ENCODE measurements at regions of chr18 and their contacts with region 1.

Region 1: DNA sequence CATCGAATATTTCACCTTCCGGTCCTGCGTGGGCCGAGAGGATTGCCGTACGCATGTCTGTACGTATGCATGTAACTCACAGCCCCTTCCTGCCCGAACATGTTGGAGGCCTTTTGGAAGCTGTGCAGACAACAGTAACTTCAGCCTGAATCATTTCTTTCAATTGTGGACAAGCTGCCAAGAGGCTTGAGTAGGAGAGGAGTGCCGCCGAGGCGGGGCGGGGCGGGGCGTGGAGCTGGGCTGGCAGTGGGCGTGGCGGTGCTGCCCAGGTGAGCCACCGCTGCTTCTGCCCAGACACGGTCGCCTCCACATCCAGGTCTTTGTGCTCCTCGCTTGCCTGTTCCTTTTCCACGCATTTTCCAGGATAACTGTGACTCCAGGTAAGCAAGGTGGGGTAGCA is at the start of gene SERPINB5:
- DNase-seq: peak; percentile 100
- H3K4me3 ChIP-seq: peak within 1 kb of the TSS; percentile 82 to 98 (median 94)
- H3K27ac ChIP-seq: peak within 1 kb of the TSS; percentile 100
- H3K4me1 ChIP-seq: peaks cover 40% of the 10 kb centered on the region
- H3K27me3 ChIP-seq: no peaks in the 10 kb centered on the region
- CTCF ChIP-seq: no peak
- total RNA-seq, gene SERPINB5: 428 to 490 TPM

Region 2: DNA sequence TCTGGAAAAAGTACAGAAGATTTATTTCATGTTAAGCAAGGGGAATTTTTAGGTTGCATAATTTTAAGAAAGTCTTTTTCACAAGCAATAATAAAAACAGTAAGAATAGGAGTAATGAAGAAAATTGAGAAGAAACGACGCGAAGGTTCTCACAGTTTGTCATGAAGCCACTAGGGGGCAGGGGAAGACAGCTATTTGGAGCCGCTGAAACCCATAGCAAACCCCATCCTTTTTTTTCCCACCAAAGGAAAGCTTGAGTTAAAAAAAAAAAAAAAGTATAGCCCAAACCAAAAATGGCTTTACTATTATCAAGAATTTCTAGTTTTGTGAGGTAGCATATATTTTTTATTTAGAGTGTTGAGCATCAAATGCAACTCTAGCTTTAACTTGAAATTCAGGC is 460.4 kb before region 1 on chr18:
- CTCF ChIA-PET with region 1: no interaction called
- dilution Hi-C with region 1: no loop called
- in situ Hi-C with region 1: no loop called
- intact Hi-C with region 1: loop called (anchors 5 kb)
- DNase-seq: peak; percentile 19
- H3K4me3 ChIP-seq: no peak overlapping the region
- H3K27ac ChIP-seq: no peak overlapping the region
- H3K4me1 ChIP-seq: no peaks in the 10 kb centered on the region
- H3K27me3 ChIP-seq: peaks cover 2% of the 10 kb centered on the region
- CTCF ChIP-seq: peak; percentile 78 to 80

Region 3: DNA sequence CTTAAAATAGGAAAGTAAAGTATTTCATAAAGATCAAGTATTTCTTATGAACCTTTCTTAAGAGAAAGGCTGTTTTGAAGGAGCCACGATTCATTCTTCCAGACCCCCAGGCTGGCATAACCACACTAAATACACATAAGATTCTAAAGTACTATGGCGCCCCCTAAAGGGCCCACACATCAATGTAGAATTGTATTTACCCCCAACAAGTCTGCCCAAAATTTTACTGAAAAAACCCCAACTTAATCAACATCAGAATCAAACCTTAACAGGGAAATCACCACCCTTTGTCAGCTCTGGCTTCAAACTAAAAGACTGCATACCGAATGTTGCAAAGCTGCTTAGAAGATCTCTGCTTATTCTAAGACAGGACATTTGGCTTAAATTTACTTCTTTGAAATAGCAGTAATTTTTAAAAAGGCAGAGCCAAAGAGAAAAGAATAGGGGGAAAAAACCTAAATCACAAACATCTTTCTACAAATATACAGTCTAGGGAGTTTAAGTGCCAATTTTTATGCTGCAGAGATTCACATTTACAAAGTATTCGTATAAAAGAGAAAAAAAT is 136.7 kb before region 1 on chr18:
- CTCF ChIA-PET with region 1: interaction called, 3 read pairs
- dilution Hi-C with region 1: no loop called
- in situ Hi-C with region 1: no loop called
- intact Hi-C with region 1: loop called (anchors 2 kb)
- DNase-seq: no peak
- H3K4me3 ChIP-seq: no peak overlapping the region
- H3K27ac ChIP-seq: no peak overlapping the region
- H3K4me1 ChIP-seq: peaks cover 16% of the 10 kb centered on the region
- H3K27me3 ChIP-seq: no peaks in the 10 kb centered on the region
- CTCF ChIP-seq: peak; percentile 48 to 53

Region 4: DNA sequence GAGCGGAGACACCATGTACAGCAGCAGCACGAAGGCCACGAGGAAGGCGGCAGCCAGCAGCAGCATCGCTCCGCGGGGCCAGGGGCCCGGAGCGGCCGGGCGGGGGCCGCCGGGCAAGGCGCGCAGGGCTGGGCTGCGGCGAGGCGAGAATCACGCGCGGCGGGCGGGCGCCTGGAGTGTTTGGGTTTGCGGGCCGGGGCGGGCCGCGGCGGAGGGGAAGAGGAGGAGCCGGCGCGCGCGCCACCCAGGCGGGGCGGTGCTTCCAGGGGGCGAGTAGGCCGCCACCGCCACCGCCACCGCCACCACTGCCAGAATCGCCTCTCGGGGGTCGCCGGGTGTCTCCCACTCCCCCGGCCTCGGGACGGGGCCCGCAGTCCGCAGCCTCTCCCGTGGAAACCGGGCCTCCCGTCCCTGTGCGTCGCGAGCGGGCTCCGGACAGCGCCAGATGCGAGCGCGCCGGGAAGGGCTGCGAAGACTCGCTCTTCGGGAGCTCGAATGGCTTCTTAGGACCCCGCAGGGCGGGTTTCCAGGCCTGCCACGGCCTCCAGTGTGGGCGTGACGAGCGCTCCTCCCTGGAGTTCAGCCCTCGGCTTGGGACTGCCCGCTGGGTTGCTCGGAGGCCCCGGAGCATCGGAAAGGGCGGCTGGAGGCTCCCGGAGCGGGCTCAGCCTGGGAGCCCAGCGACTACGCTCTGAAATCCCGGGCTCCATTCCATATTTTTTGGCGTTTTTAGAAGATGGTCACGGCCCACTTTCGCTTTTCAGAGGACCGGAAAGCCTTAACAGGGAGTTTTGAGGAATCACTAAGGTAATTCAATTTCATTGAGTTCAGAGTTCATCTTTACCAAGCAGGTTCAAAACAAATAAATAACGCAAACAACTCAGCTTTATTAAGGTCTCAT is 109.4 kb before region 1 on chr18 and contains the start of gene KDSR:
- CTCF ChIA-PET with region 1: no interaction called
- dilution Hi-C with region 1: no loop called
- in situ Hi-C with region 1: no loop called
- intact Hi-C with region 1: loop called (anchors 2 kb)
- DNase-seq: peak; percentile 99
- H3K4me3 ChIP-seq: peak within 1 kb of the TSS; percentile 72 to 92 (median 87)
- H3K27ac ChIP-seq: peak within 1 kb of the TSS; percentile 81
- H3K4me1 ChIP-seq: peaks cover 15% of the 10 kb centered on the region
- H3K27me3 ChIP-seq: no peaks in the 10 kb centered on the region
- CTCF ChIP-seq: no peak
- total RNA-seq, gene KDSR: 65.7 to 101 TPM

Region 5: GRCh38 chr18:63410792-63411191 is 65.9 kb before region 1 on chr18:
- CTCF ChIA-PET with region 1: no interaction called
- dilution Hi-C with region 1: no loop called
- in situ Hi-C with region 1: no loop called
- intact Hi-C with region 1: no loop called
- DNase-seq: peak; percentile 80
- H3K4me3 ChIP-seq: no peak overlapping the region
- H3K27ac ChIP-seq: peak overlapping the region; percentile 73
- H3K4me1 ChIP-seq: peaks cover 42% of the 10 kb centered on the region
- H3K27me3 ChIP-seq: no peaks in the 10 kb centered on the region
- CTCF ChIP-seq: no peak

Region 6: DNA sequence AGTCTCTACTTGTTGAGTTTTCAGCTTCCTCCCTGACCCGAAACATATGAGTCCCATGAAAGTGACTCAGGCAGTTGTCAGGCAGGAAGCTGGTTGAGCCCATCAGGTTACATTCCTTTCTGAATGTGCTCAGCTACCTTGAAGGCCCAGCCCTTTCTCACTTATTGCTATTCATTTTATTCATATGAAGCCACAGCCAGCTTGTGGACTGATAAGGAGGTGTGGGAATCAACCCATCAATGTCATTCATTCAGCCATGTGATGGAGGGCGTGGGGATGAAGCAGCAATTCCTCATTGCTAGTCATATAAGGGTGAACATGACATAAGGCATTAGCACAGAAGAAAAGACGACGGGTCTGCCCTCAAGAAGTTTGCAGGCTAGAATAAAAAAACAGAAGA is 49.1 kb before region 1 on chr18:
- CTCF ChIA-PET with region 1: no interaction called
- dilution Hi-C with region 1: no loop called
- in situ Hi-C with region 1: no loop called
- intact Hi-C with region 1: loop called (anchors 1 kb)
- DNase-seq: peak; percentile 100
- H3K4me3 ChIP-seq: no peak overlapping the region
- H3K27ac ChIP-seq: peak overlapping the region; percentile 96
- H3K4me1 ChIP-seq: peaks cover 26% of the 10 kb centered on the region
- H3K27me3 ChIP-seq: no peaks in the 10 kb centered on the region
- CTCF ChIP-seq: no peak

Region 7: GRCh38 chr18:63444567-63444966 is 32.1 kb before region 1 on chr18:
- CTCF ChIA-PET with region 1: interaction called, 3 read pairs
- dilution Hi-C with region 1: no loop called
- in situ Hi-C with region 1: loop called in 1 of 2 experiments (anchors 5 kb)
- intact Hi-C with region 1: loop called (anchors 1 kb)
- DNase-seq: peak; percentile 96
- H3K4me3 ChIP-seq: no peak overlapping the region
- H3K27ac ChIP-seq: peak overlapping the region; percentile 99
- H3K4me1 ChIP-seq: peaks cover 46% of the 10 kb centered on the region
- H3K27me3 ChIP-seq: no peaks in the 10 kb centered on the region
- CTCF ChIP-seq: no peak

Region 8: GRCh38 chr18:63505566-63506335 is 29.1 kb after region 1 on chr18:
- CTCF ChIA-PET with region 1: no interaction called
- dilution Hi-C with region 1: no loop called
- in situ Hi-C with region 1: no loop called
- intact Hi-C with region 1: no loop called
- DNase-seq: peak; percentile 72
- H3K4me3 ChIP-seq: no peak overlapping the region
- H3K27ac ChIP-seq: no peak overlapping the region
- H3K4me1 ChIP-seq: no peaks in the 10 kb centered on the region
- H3K27me3 ChIP-seq: no peaks in the 10 kb centered on the region
- CTCF ChIP-seq: peak; percentile 60 to 79